ENCODE measurements at regions of chr14 and their contacts with region 1.

Region 1: GRCh38 chr14:37142835-37143401 is 29.5 kb downstream of the SLC25A21 start:
- DNase-seq: peak; percentile 68
- H3K4me3 ChIP-seq: no peak overlapping the region
- H3K27ac ChIP-seq: no peak overlapping the region
- H3K4me1 ChIP-seq: no peaks in the 10 kb centered on the region
- H3K27me3 ChIP-seq: no peaks in the 10 kb centered on the region

Region 2: GRCh38 chr14:36655963-36656686 is 486.8 kb before region 1 on chr14:
- in situ Hi-C with region 1: loop called (anchors 10 kb)
- DNase-seq: peak; percentile 42
- H3K4me3 ChIP-seq: no peak overlapping the region
- H3K27ac ChIP-seq: no peak overlapping the region
- H3K4me1 ChIP-seq: no peaks in the 10 kb centered on the region
- H3K27me3 ChIP-seq: peaks cover 99% of the 10 kb centered on the region